ENCODE measurements at regions of chr18 and their contacts with region 1.

Region 1: DNA sequence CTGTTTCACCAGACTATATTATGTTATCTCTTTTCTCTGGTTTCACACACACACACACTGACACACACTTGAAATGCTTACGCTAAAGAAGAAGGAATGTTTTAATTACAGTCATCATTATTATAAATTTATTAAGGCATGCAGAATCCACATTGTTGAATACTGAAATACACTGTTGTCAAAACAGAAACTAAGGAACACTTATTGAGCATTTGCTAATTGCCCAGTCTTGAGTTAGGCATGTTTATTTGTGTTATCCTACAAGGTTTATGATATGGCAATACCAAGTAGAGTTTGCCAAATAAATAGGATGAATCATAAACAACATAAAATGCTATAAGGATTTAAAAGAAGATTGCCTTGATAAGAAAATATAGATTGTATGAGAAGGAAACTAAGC is 917.0 kb upstream of the PIK3C3 start:
- DNase-seq: no peak
- ATAC-seq: no peak
- H3K4me3 ChIP-seq: no peak overlapping the region
- H3K27ac ChIP-seq: no peak overlapping the region
- H3K4me1 ChIP-seq: no peaks in the 10 kb centered on the region
- H3K27me3 ChIP-seq: no peaks in the 10 kb centered on the region
- CTCF ChIP-seq: no peak

Region 2: GRCh38 chr18:40866013-40866645 is 171.9 kb before region 1 on chr18:
- CTCF ChIA-PET with region 1: no interaction called
- POLR2A ChIA-PET with region 1: no interaction called
- in situ Hi-C with region 1: no loop called
- intact Hi-C with region 1: no loop called
- DNase-seq: no peak
- ATAC-seq: no peak
- H3K4me3 ChIP-seq: no peak overlapping the region
- H3K27ac ChIP-seq: no peak overlapping the region
- H3K4me1 ChIP-seq: no peaks in the 10 kb centered on the region
- H3K27me3 ChIP-seq: no peaks in the 10 kb centered on the region
- CTCF ChIP-seq: no peak

Region 3: DNA sequence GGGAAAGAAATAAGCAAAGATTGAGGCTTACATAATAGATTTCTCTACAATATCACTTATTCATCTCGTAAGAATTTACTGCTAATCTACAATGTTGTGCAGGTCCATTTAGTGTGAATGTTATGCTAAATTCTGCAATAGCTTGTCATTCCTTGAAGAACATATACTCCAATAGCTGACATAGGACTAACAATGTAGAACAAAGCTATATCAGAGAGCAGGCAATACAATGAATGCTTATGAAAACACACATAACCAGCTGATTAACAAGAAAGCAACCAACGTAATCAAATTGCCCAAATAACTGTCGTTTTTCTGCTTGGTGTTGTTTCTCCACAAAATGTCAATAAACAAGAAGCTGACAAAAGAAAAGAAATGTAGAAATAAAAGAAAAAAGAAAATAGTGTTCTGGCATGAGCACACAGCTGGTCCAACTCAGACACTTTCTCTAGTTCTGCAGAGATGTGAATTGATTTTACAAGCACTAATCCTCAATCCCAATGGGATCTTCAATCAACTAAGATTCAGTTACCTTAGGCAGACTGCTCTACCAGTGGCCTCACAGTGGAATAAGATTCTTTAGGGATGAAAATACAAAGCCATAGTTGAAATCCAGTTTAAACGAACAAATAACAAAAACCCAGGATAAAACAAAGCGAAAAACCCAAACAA is 107.7 kb before region 1 on chr18:
- CTCF ChIA-PET with region 1: interaction called, 12 read pairs
- POLR2A ChIA-PET with region 1: no interaction called
- in situ Hi-C with region 1: no loop called
- intact Hi-C with region 1: no loop called
- DNase-seq: no peak
- ATAC-seq: no peak
- H3K4me3 ChIP-seq: no peak overlapping the region
- H3K27ac ChIP-seq: no peak overlapping the region
- H3K4me1 ChIP-seq: no peaks in the 10 kb centered on the region
- H3K27me3 ChIP-seq: no peaks in the 10 kb centered on the region
- CTCF ChIP-seq: no peak

Measured in Panc1 (cell line).